CD14-positive monocyte (primary cell): ENCODE measurements at regions of chr7 and their contacts with region 1.

Region 1: DNA sequence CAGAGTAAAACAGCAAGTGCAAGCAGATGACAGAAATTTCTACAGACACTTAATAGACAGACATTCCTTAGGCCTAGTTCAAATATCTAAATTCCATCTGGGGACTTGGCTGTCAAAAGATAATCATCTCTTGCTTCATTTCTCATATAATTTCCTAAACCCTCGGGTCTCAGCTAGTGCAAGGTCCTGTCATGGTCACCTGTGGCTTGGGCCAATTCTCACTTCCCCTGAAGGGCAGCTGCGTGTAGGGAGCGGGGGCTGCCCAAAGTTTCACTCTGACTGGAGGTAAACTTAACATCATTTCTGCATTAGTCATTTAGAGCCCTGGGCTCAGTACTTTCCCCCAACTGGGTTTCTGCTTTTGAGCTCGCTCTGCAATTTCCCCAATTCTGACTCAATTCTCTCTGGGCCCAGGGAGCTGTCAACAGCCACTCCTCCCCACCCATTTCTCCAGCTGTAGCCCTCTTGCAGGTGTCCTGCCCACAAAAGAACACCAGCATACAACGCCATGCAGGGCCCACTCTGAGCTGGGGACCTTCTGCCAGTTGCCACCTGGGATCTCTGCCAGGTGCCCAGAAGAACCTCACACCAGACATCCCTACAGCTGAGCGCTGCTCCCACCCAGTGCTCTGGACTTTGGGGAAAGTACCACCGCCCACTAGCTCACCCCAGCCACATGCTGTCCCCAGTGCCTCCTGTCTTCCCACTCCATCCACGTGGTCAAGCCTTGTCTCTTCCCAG is 38.0 kb downstream of the VOPP1 start:
- DNase-seq: peak; percentile 97 to 100 (median 99)
- H3K4me3 ChIP-seq: no peak overlapping the region
- H3K4me3 Mint-ChIP-seq: peak overlapping the region; percentile 58 to 71
- H3K27ac ChIP-seq: peak overlapping the region; percentile 97 to 98
- H3K27ac Mint-ChIP-seq: peak overlapping the region; percentile 98 to 99 (median 99)
- H3K4me1 ChIP-seq: peaks cover 66 to 71% of the 10 kb centered on the region in 2 donors
- H3K4me1 Mint-ChIP-seq: peaks cover 75% of the 10 kb centered on the region
- H3K27me3 ChIP-seq: no peaks in the 10 kb centered on the region
- H3K27me3 Mint-ChIP-seq: peaks cover 0 to 2% (median 0%) of the 10 kb centered on the region in 3 donors
- CTCF ChIP-seq: no peak

Region 2: GRCh38 chr7:55509322-55509721 is 25.0 kb before region 1 on chr7:
- intact Hi-C with region 1: loop called in 1 of 2 experiments (anchors 2 kb)
- DNase-seq: peak; percentile 83 to 93 (median 84)
- H3K4me3 ChIP-seq: no peak overlapping the region
- H3K4me3 Mint-ChIP-seq: no peak overlapping the region
- H3K27ac ChIP-seq: peak overlapping the region in 1 of 2 donors; percentile 67
- H3K27ac Mint-ChIP-seq: peak overlapping the region; percentile 28 to 93 (median 81)
- H3K4me1 ChIP-seq: peaks cover 5 to 20% of the 10 kb centered on the region in 2 donors
- H3K4me1 Mint-ChIP-seq: peaks cover 24% of the 10 kb centered on the region
- H3K27me3 ChIP-seq: no peaks in the 10 kb centered on the region
- H3K27me3 Mint-ChIP-seq: no peaks in the 10 kb centered on the region
- CTCF ChIP-seq: no peak

Region 3: DNA sequence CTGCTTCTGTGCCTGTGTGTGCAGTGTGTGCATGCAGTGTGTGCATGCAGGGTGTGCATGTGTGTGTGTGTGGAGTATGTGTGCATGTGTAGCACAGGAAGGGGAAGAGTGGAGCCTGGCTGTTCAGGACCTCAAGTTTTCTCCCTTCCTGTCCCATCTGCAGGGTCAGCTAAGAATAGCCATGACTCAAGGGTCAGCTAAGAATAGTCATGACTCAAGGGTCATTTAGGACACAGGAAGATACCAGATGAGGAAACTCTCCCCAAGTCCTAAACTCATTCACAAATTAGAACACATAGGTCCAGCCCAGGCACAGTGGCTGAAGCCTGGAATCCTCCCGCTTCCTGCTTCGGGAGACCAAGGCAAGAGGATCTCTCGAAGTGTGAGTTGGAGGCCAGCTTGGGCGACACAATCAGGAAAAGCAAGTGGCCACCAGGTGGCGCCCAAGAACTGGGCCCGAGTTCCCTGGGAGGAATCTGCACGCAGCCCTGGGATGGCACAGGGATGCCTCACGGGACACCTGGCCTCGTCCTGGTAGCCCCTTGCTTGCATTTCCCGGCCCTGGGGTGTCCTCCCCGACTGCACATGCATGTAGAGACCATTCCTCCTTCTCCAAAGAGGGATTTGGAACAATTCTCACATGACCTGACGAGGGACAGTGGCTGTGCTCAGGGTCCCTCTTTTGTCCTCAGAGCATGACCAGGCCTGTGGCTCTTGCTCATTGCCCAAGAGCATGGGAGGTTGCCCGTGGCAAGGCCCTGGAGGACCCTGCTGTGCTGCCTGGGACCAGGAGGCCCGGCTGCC is 59.4 kb after region 1 on chr7:
- intact Hi-C with region 1: loop called in 1 of 2 experiments (anchors 5 kb)
- DNase-seq: peak; percentile 39 to 82 (median 60)
- H3K4me3 ChIP-seq: no peak overlapping the region
- H3K4me3 Mint-ChIP-seq: no peak overlapping the region
- H3K27ac ChIP-seq: no peak overlapping the region
- H3K27ac Mint-ChIP-seq: no peak overlapping the region
- H3K4me1 ChIP-seq: no peaks in the 10 kb centered on the region
- H3K4me1 Mint-ChIP-seq: peaks cover 8% of the 10 kb centered on the region
- H3K27me3 ChIP-seq: no peaks in the 10 kb centered on the region
- H3K27me3 Mint-ChIP-seq: peaks cover 4 to 15% (median 8%) of the 10 kb centered on the region in 3 donors
- CTCF ChIP-seq: peak; percentile 84